Prostate gland (tissue), 2 donors: ENCODE measurements at regions of chr9 and their contacts with region 1.

Region 1: GRCh38 chr9:37913480-37914153 is 9.7 kb upstream of the SLC25A51 start:
- DNase-seq: peak; percentile 82
- H3K4me3 ChIP-seq: no peak overlapping the region
- H3K27ac ChIP-seq: no peak overlapping the region
- H3K4me1 ChIP-seq: peaks cover 2% of the 10 kb centered on the region
- H3K27me3 ChIP-seq: no peaks in the 10 kb centered on the region
- CTCF ChIP-seq: peak; percentile 94 to 97 (median 96)
- POLR2A ChIP-seq: no peak

Region 2: GRCh38 chr9:37678789-37679273 is 234.8 kb before region 1 on chr9:
- intact Hi-C with region 1: no loop called
- DNase-seq: no peak
- H3K4me3 ChIP-seq: no peak overlapping the region
- H3K27ac ChIP-seq: no peak overlapping the region
- H3K4me1 ChIP-seq: no peaks in the 10 kb centered on the region
- H3K27me3 ChIP-seq: no peaks in the 10 kb centered on the region
- CTCF ChIP-seq: no peak
- POLR2A ChIP-seq: no peak

Region 3: GRCh38 chr9:37876376-37876775 is 37.2 kb before region 1 on chr9:
- intact Hi-C with region 1: no loop called
- DNase-seq: no peak
- H3K4me3 ChIP-seq: no peak overlapping the region
- H3K27ac ChIP-seq: no peak overlapping the region
- H3K4me1 ChIP-seq: no peaks in the 10 kb centered on the region
- H3K27me3 ChIP-seq: no peaks in the 10 kb centered on the region
- CTCF ChIP-seq: no peak
- POLR2A ChIP-seq: no peak

Region 4: GRCh38 chr9:37984672-37985611 is 71.3 kb after region 1 on chr9:
- intact Hi-C with region 1: no loop called
- DNase-seq: no peak
- H3K4me3 ChIP-seq: no peak overlapping the region
- H3K27ac ChIP-seq: no peak overlapping the region
- H3K4me1 ChIP-seq: no peaks in the 10 kb centered on the region
- H3K27me3 ChIP-seq: no peaks in the 10 kb centered on the region
- CTCF ChIP-seq: no peak
- POLR2A ChIP-seq: no peak

Region 5: GRCh38 chr9:38068866-38069629 is 155.4 kb after region 1 on chr9 and contains the start of gene SHB:
- intact Hi-C with region 1: loop called (anchors 5 kb)
- DNase-seq: peak; percentile 81
- H3K4me3 ChIP-seq: peak within 1 kb of the TSS; percentile 93 to 96
- H3K27ac ChIP-seq: peak within 1 kb of the TSS; percentile 88 to 90
- H3K4me1 ChIP-seq: peaks cover 9% of the 10 kb centered on the region
- H3K27me3 ChIP-seq: no peaks in the 10 kb centered on the region
- CTCF ChIP-seq: peak in 1 of 4 experiments; percentile 65
- POLR2A ChIP-seq: peak; percentile 69
- total RNA-seq, gene SHB: 53.2 to 54.8 TPM

Region 6: DNA sequence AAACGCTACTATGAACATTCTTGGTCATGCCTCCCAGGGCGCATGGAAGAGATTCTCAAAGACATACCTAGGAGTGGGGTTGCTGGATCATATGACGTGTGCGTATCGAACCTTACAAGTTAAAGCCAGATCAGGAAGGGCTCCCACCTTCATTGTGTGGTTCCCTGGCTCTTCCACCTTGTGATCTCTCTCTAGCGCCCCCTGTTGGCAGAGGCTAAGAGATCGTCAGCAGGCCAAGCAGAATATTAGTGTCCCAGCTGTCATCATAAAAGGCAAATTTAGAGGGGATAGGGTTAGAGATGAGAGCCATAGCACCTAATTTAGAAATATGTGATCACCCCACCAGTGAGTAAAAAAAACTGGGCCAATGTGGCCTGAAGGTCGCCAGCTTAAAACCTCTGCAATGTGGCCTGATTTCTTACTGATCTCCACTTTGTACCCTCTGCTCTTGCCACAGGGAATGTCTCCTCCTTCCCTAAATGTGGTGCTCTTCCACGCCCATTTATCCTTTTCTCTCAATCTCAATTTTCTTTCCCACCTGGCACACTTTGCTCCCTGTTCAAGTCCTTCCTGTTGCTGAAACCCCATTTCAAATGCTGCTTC is 247.1 kb after region 1 on chr9:
- intact Hi-C with region 1: loop called (anchors 5 kb)
- DNase-seq: no peak
- H3K4me3 ChIP-seq: no peak overlapping the region
- H3K27ac ChIP-seq: no peak overlapping the region
- H3K4me1 ChIP-seq: peaks cover 10% of the 10 kb centered on the region
- H3K27me3 ChIP-seq: no peaks in the 10 kb centered on the region
- CTCF ChIP-seq: peak in 3 of 4 experiments; percentile 24 to 60 (median 55)
- POLR2A ChIP-seq: no peak

Region 7: DNA sequence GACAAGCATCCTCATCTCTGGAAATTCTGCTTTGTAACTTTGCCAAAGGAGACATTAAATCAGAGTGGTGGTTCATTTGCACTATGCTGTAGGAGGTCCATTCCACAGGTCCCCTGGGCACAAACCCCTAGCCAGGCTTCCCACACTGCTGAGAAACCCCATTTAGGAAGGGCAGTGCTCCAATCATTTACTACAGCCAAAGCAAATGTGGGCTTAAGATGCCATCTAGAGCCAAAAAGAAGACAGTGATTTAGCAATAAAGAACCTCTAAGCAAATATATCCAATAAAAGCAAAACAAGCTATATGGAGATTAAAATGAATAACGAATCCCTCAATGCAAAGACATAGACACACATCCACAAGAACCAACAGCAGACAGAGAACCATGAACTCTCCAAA is 349.9 kb after region 1 on chr9:
- intact Hi-C with region 1: loop called (anchors 10 kb)
- DNase-seq: no peak
- H3K4me3 ChIP-seq: no peak overlapping the region
- H3K27ac ChIP-seq: no peak overlapping the region
- H3K4me1 ChIP-seq: no peaks in the 10 kb centered on the region
- H3K27me3 ChIP-seq: no peaks in the 10 kb centered on the region
- CTCF ChIP-seq: peak in 2 of 4 experiments; percentile 32 to 37
- POLR2A ChIP-seq: no peak

Region 8: DNA sequence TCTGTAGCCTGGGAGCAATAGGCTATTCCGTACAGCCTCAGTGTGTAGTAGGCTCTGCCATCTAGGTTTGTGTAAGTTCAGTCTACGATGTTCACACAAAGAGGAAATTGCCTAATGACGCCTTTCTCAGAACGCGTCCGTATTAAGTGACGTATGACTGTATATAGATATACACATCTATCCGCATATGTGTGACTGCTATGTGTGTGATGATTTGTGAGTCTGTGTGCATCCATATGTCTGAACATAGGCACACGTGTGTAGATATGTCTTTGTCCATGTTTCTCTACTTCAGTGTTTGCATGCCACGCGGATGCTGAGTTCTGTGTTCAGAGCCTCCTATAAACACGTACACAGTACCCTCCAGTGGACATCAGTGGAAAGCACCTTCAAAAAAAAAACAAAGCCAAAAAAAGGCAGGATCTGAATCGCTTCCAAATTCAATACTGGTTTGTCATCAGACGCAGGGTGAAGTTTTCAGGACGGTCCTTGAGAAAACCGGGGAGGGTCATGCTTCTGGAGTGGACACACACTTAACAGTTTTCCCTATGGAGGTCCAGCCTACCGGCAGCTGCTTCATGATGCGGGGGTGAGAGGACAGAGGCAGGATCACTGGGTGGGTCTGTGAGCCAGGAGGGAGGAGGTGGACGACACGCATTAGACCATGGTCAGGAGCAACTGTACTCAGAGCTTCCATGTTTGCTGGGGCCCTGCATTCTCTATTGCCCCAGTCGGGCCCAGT is 449.4 kb after region 1 on chr9:
- intact Hi-C with region 1: loop called (anchors 2 kb)
- DNase-seq: peak; percentile 41
- H3K4me3 ChIP-seq: no peak overlapping the region
- H3K27ac ChIP-seq: no peak overlapping the region
- H3K4me1 ChIP-seq: no peaks in the 10 kb centered on the region
- H3K27me3 ChIP-seq: no peaks in the 10 kb centered on the region
- CTCF ChIP-seq: peak in 3 of 4 experiments; percentile 47 to 64 (median 52)
- POLR2A ChIP-seq: no peak